ENCODE measurements at regions of chr2 and their contacts with region 1.

Region 1: DNA sequence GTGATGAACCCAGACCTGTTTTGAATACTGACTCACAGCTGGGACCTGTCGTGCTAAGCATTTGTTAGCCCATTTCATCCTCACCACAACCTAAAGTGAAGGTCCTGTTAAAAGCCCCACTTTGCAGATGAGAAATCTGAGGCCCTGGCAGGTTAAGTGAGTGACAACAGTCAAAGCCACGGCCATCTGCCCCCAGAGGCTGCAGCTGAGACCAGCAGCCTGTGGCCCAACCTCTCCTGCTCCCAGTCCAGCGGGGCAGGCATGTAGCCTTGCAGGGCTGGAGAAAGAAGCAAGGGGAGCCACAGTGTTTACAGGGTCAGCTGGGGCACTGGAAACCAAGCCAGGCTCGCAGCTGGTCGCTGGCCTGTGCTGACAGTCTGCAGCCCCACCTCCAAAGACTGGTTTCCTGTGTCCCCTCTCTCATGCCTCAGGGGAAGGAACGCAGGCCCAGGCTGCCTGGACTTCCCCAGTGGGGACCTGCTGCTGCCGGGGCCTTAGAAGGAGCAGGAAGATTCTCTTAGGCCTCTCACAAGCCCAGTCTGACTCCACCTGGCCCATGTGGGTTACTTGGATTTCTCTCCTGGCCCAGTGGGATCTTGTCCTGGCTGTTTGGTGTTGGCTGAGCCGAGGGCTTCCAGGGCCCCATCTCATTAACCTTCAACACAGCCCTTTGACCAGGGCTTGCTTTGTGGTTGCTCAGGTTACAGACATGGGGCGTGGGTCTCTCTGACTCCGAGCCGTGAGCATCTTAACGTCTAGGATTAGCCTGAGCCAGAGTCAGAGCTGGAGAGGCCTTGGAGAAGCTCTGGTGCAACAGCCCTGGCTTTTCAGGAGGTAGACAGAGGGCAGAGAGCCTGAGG is 1.7 kb downstream of the INPP5D start:
- DNase-seq: peak in 1 of 9 donors; percentile 41
- ATAC-seq: peak; percentile 32
- H3K4me3 ChIP-seq: peak overlapping the region; percentile 88
- H3K4me3 Mint-ChIP-seq: peak overlapping the region; percentile 86 to 98 (median 96)
- H3K27ac ChIP-seq: peak overlapping the region; percentile 85
- H3K27ac Mint-ChIP-seq: peak overlapping the region; percentile 90 to 99 (median 95)
- H3K4me1 ChIP-seq: peaks cover 33 to 41% of the 10 kb centered on the region in 2 donors
- H3K4me1 Mint-ChIP-seq: peaks cover 35 to 60% (median 48%) of the 10 kb centered on the region in 7 donors
- H3K27me3 ChIP-seq: no peaks in the 10 kb centered on the region
- H3K27me3 Mint-ChIP-seq: no peaks in the 10 kb centered on the region

Region 2: GRCh38 chr2:232600053-232600773 is 461.6 kb before region 1 on chr2:
- CTCF ChIA-PET with region 1: no interaction called
- POLR2A ChIA-PET with region 1: no interaction called
- intact Hi-C with region 1: loop called in 1 of 2 experiments (anchors 10 kb)
- DNase-seq: no peak
- ATAC-seq: no peak
- H3K4me3 ChIP-seq: no peak overlapping the region
- H3K4me3 Mint-ChIP-seq: no peak overlapping the region
- H3K27ac ChIP-seq: no peak overlapping the region
- H3K27ac Mint-ChIP-seq: no peak overlapping the region
- H3K4me1 ChIP-seq: no peaks in the 10 kb centered on the region
- H3K4me1 Mint-ChIP-seq: peaks cover 0 to 3% (median 0%) of the 10 kb centered on the region in 7 donors
- H3K27me3 ChIP-seq: no peaks in the 10 kb centered on the region
- H3K27me3 Mint-ChIP-seq: peaks cover 0 to 11% (median 0%) of the 10 kb centered on the region in 5 donors

Region 3: GRCh38 chr2:232697100-232697865 is 364.5 kb before region 1 on chr2 and contains the start of gene GIGYF2:
- CTCF ChIA-PET with region 1: no interaction called
- POLR2A ChIA-PET with region 1: no interaction called
- intact Hi-C with region 1: loop called in 1 of 2 experiments (anchors 10 kb)
- DNase-seq: peak; percentile 73 to 94 (median 84)
- ATAC-seq: peak; percentile 95
- H3K4me3 ChIP-seq: peak within 1 kb of the TSS; percentile 94
- H3K4me3 Mint-ChIP-seq: peak within 1 kb of the TSS; percentile 88 to 98 (median 93)
- H3K27ac ChIP-seq: peak within 1 kb of the TSS; percentile 96
- H3K27ac Mint-ChIP-seq: peak within 1 kb of the TSS; percentile 82 to 96 (median 87)
- H3K4me1 ChIP-seq: peaks cover 35 to 37% of the 10 kb centered on the region in 2 donors
- H3K4me1 Mint-ChIP-seq: peaks cover 22 to 40% (median 35%) of the 10 kb centered on the region in 7 donors
- H3K27me3 ChIP-seq: no peaks in the 10 kb centered on the region
- H3K27me3 Mint-ChIP-seq: peaks cover 0 to 10% (median 0%) of the 10 kb centered on the region in 5 donors
- total RNA-seq, gene GIGYF2: 70.7 to 82.8 (median 79.8) TPM

Region 4: GRCh38 chr2:233100192-233100998 is 38.6 kb after region 1 on chr2:
- CTCF ChIA-PET with region 1: interaction called, 6 read pairs
- POLR2A ChIA-PET with region 1: interaction called, 9 read pairs
- intact Hi-C with region 1: loop called (anchors 1 to 5 kb)
- DNase-seq: peak in 7 of 9 donors; percentile 32 to 57 (median 45)
- ATAC-seq: peak; percentile 73
- H3K4me3 ChIP-seq: peak overlapping the region; percentile 15
- H3K4me3 Mint-ChIP-seq: peak overlapping the region; percentile 59 to 83 (median 72)
- H3K27ac ChIP-seq: no peak overlapping the region
- H3K27ac Mint-ChIP-seq: peak overlapping the region; percentile 12 to 88 (median 76)
- H3K4me1 ChIP-seq: peaks cover 31 to 48% of the 10 kb centered on the region in 2 donors
- H3K4me1 Mint-ChIP-seq: peaks cover 55 to 86% (median 78%) of the 10 kb centered on the region in 7 donors
- H3K27me3 ChIP-seq: no peaks in the 10 kb centered on the region
- H3K27me3 Mint-ChIP-seq: no peaks in the 10 kb centered on the region

Region 5: DNA sequence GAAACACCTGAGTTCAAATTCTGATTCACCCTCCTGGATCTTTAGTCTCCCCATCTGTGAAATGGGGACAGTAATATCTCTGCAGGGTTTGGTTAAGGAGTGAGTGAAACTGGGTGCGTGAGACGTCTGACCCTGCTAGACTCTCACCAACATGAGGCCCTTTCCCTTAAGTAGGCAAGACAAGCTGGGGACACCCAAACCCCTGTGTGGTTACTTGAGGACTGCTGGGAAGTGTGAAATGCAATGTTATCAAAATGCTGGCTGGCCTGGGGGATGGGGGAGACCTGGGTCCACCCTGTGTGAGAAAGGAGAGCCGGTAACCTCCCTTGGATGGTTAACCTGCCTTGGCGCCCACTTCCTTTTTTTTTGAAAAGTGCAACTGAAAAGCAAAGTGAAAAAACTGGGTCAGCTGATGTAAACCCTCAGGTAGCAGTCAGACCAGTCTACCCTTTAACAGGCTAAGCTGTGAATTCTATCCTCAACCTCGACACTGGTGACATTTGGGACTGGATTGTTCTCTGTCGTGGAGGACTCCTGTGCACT is 80.6 kb after region 1 on chr2:
- CTCF ChIA-PET with region 1: no interaction called
- POLR2A ChIA-PET with region 1: interaction called, 8 read pairs
- intact Hi-C with region 1: loop called in 1 of 2 experiments (anchors 2 kb)
- DNase-seq: peak in 1 of 9 donors; percentile 11
- ATAC-seq: peak; percentile 72
- H3K4me3 ChIP-seq: no peak overlapping the region
- H3K4me3 Mint-ChIP-seq: peak overlapping the region in 5 of 10 donors; percentile 21 to 65 (median 30)
- H3K27ac ChIP-seq: peak overlapping the region; percentile 1
- H3K27ac Mint-ChIP-seq: peak overlapping the region; percentile 75 to 90 (median 80)
- H3K4me1 ChIP-seq: peaks cover 8 to 19% of the 10 kb centered on the region in 2 donors
- H3K4me1 Mint-ChIP-seq: peaks cover 30 to 48% (median 38%) of the 10 kb centered on the region in 7 donors
- H3K27me3 ChIP-seq: no peaks in the 10 kb centered on the region
- H3K27me3 Mint-ChIP-seq: no peaks in the 10 kb centered on the region

Measured in naive thymus-derived CD4-positive, alpha-beta T cell (primary cell).